Ovary (tissue), 10 donors: ENCODE measurements at regions of chr17 and their contacts with region 1.

Region 1: DNA sequence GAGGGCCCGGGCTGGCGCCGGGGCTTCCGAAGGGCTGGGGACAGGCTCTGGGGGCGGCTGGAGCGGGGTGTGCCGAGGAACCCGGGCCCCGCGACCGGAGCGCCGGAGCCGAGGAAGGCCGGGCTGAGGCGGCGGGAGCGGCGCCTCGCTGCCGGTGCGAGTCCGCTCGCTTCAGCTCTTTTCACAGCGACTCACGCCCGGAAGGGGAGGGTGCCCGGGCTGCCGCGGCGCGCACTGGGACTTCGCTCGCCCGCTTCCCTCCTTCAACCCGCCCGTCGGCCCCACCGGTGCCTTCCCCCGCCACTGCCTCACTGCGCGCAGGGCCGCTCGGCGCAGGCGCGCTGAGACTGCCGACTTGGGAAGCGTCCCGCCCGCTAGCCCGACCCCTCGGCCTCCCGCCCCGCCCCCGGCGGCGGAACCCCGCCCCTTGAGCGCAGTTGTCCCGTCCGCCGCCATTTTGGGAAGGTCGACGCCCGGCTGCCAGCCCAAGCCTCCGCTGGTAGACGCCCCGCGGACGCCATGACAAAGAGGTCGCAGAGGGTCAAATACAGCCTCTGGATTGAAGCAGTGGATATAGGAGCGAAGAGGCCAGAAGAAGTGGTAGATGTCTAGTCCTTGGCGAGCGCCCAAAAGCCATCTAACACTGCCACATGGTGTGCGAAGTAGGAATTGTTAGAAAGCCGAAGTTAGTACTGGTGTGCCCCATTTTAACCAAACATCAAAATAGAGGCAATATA is at the start of gene UBE2G1:
- DNase-seq: peak; percentile 97 to 99 (median 98)
- H3K4me3 ChIP-seq: peak within 1 kb of the TSS; percentile 93
- H3K27ac ChIP-seq: peak within 1 kb of the TSS; percentile 83 to 91
- H3K4me1 ChIP-seq: peaks cover 3% of the 10 kb centered on the region
- H3K27me3 ChIP-seq: no peaks in the 10 kb centered on the region
- CTCF ChIP-seq: peak in 2 of 3 donors; percentile 41 to 45
- EP300 ChIP-seq: no peak
- POLR2A ChIP-seq: peak; percentile 90
- total RNA-seq, gene UBE2G1: 30.5 to 46.1 (median 36.5) TPM

Region 2: GRCh38 chr17:4310349-4311060 is 56.0 kb before region 1 on chr17:
- intact Hi-C with region 1: loop called in 1 of 4 experiments (anchors 10 kb)
- DNase-seq: no peak
- H3K4me3 ChIP-seq: no peak overlapping the region
- H3K27ac ChIP-seq: no peak overlapping the region
- H3K4me1 ChIP-seq: peaks cover 9% of the 10 kb centered on the region
- H3K27me3 ChIP-seq: no peaks in the 10 kb centered on the region
- CTCF ChIP-seq: no peak
- EP300 ChIP-seq: no peak
- POLR2A ChIP-seq: no peak